Naive thymus-derived CD4-positive, alpha-beta T cell (primary cell): ENCODE measurements at regions of chr10 and their contacts with region 1.

Region 1: DNA sequence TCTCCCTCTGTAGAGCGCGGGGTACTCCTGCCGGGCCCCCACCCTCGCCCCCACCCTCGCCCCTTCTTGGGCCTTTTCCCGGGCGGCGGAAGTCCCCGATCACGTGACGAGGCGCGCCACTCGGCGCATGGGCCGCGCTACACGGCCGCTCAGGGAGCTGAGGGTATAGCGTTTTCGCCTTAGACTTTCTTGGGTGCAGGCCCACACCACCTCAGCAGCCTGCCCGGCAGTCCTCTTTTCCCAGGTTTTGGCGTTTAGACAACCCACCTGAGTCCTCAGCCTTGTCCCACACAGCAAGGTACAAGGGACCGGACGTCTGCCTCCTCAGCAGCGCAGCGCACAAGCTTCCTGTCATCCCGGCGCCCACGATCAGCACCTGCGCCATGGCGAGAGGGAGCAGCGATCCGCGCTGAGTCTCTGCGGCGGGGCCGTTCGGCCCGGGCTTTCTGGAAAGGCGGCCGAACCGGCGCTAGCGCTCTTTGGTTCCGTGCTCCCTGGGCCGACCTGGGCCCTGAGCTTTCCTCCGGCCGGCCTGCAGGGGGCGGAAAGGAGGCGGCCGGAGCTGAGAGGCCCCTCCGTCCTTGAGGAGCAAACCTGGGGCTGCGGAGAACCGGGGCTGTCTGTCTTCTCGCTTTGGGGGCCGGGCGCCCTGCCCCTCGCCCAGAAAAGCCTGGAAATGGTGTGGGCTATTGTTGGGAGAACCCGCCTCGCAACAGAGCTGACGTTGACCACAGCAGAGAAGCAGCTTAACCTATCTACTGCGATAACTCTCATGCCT is at the start of gene RNLS:
- DNase-seq: peak; percentile 46 to 66 (median 62)
- ATAC-seq: peak; percentile 90
- H3K4me3 ChIP-seq: peak within 1 kb of the TSS; percentile 90
- H3K4me3 Mint-ChIP-seq: peak within 1 kb of the TSS; percentile 88 to 95 (median 90)
- H3K27ac ChIP-seq: peak within 1 kb of the TSS; percentile 80
- H3K27ac Mint-ChIP-seq: peak within 1 kb of the TSS; percentile 84 to 97 (median 91)
- H3K4me1 ChIP-seq: peaks cover 6 to 8% of the 10 kb centered on the region in 2 donors
- H3K4me1 Mint-ChIP-seq: peaks cover 8 to 16% (median 12%) of the 10 kb centered on the region in 7 donors
- H3K27me3 ChIP-seq: no peaks in the 10 kb centered on the region
- H3K27me3 Mint-ChIP-seq: peaks cover 0 to 19% (median 4%) of the 10 kb centered on the region in 5 donors
- total RNA-seq, gene RNLS: 1.5 to 3.6 (median 2.9) TPM

Region 2: DNA sequence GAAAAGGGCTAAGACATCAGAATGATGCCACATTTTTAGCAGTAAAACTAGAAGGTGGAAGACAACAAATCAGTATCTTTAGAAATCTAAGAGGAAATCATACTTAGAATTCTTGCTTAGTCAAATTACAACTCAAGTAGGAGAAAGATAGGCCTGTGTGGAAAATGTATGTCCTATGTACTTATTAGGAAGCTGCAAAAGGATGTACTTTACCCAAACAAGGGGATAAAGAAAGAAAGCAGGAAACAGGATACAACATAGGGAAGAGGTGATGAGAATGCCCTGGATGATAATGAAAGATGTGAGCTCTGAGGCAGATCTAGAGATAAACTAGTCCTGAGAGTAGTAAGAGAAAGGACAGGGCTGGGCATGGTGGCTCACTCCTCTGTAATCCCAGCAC is 54.8 kb before region 1 on chr10:
- CTCF ChIA-PET with region 1: no interaction called
- POLR2A ChIA-PET with region 1: no interaction called
- intact Hi-C with region 1: no loop called
- DNase-seq: no peak
- ATAC-seq: no peak
- H3K4me3 ChIP-seq: no peak overlapping the region
- H3K4me3 Mint-ChIP-seq: no peak overlapping the region
- H3K27ac ChIP-seq: no peak overlapping the region
- H3K27ac Mint-ChIP-seq: no peak overlapping the region
- H3K4me1 ChIP-seq: no peaks in the 10 kb centered on the region
- H3K4me1 Mint-ChIP-seq: peaks cover 0 to 5% (median 0%) of the 10 kb centered on the region in 7 donors
- H3K27me3 ChIP-seq: no peaks in the 10 kb centered on the region
- H3K27me3 Mint-ChIP-seq: peaks cover 0 to 13% (median 0%) of the 10 kb centered on the region in 5 donors

Region 3: DNA sequence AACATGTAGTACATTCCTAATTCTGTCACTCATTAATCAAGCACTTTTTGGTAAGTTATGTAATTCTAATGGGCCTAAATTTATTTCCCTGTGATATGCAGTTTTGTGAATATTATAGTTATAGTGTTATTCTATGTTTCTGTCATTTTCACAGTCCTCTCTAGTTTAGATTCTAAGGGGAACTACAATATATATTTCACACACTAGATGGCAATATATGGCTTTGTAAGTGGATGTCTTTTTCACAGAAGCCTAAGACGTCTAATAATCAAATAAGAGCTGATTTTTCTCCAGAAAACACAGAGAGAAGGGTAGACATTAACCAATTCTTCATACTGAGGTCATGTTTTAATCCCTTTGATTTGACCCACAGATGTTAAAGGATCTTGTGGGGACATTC is 17.9 kb before region 1 on chr10:
- CTCF ChIA-PET with region 1: interaction called, 6 read pairs
- POLR2A ChIA-PET with region 1: no interaction called
- intact Hi-C with region 1: loop called in 1 of 2 experiments (anchors 1 kb)
- DNase-seq: peak in 4 of 9 donors; percentile 5 to 29 (median 12)
- ATAC-seq: peak; percentile 54
- H3K4me3 ChIP-seq: no peak overlapping the region
- H3K4me3 Mint-ChIP-seq: no peak overlapping the region
- H3K27ac ChIP-seq: no peak overlapping the region
- H3K27ac Mint-ChIP-seq: no peak overlapping the region
- H3K4me1 ChIP-seq: no peaks in the 10 kb centered on the region
- H3K4me1 Mint-ChIP-seq: peaks cover 0 to 4% (median under 1%) of the 10 kb centered on the region in 7 donors
- H3K27me3 ChIP-seq: no peaks in the 10 kb centered on the region
- H3K27me3 Mint-ChIP-seq: peaks cover 0 to 23% (median 0%) of the 10 kb centered on the region in 5 donors

Region 4: GRCh38 chr10:88828310-88828709 is 245.3 kb after region 1 on chr10:
- CTCF ChIA-PET with region 1: no interaction called
- POLR2A ChIA-PET with region 1: no interaction called
- intact Hi-C with region 1: loop called in 1 of 2 experiments (anchors 5 kb)
- DNase-seq: no peak
- ATAC-seq: no peak
- H3K4me3 ChIP-seq: no peak overlapping the region
- H3K4me3 Mint-ChIP-seq: no peak overlapping the region
- H3K27ac ChIP-seq: no peak overlapping the region
- H3K27ac Mint-ChIP-seq: peak overlapping the region in 2 of 9 donors; percentile 49 to 98
- H3K4me1 ChIP-seq: peaks cover 40 to 68% of the 10 kb centered on the region in 2 donors
- H3K4me1 Mint-ChIP-seq: peaks cover 32 to 80% (median 73%) of the 10 kb centered on the region in 7 donors
- H3K27me3 ChIP-seq: no peaks in the 10 kb centered on the region
- H3K27me3 Mint-ChIP-seq: no peaks in the 10 kb centered on the region